ENCODE measurements at regions of chr1 and their contacts with region 1.

Region 1: GRCh38 chr1:27804791-27805190 is 25.8 kb upstream of the PPP1R8 start:
- H3K4me3 Mint-ChIP-seq: no peak overlapping the region
- H3K27ac Mint-ChIP-seq: no peak overlapping the region
- H3K4me1 Mint-ChIP-seq: no peaks in the 10 kb centered on the region
- H3K27me3 Mint-ChIP-seq: no peaks in the 10 kb centered on the region

Region 2: GRCh38 chr1:27744556-27744955 is 60.2 kb before region 1 on chr1:
- intact Hi-C with region 1: loop called (anchors 10 kb)
- H3K4me3 Mint-ChIP-seq: no peak overlapping the region
- H3K27ac Mint-ChIP-seq: no peak overlapping the region
- H3K4me1 Mint-ChIP-seq: peaks cover 3% of the 10 kb centered on the region
- H3K27me3 Mint-ChIP-seq: no peaks in the 10 kb centered on the region

Region 3: GRCh38 chr1:27760426-27760825 is 44.4 kb before region 1 on chr1:
- intact Hi-C with region 1: no loop called
- H3K4me3 Mint-ChIP-seq: no peak overlapping the region
- H3K27ac Mint-ChIP-seq: no peak overlapping the region
- H3K4me1 Mint-ChIP-seq: no peaks in the 10 kb centered on the region
- H3K27me3 Mint-ChIP-seq: no peaks in the 10 kb centered on the region

Region 4: DNA sequence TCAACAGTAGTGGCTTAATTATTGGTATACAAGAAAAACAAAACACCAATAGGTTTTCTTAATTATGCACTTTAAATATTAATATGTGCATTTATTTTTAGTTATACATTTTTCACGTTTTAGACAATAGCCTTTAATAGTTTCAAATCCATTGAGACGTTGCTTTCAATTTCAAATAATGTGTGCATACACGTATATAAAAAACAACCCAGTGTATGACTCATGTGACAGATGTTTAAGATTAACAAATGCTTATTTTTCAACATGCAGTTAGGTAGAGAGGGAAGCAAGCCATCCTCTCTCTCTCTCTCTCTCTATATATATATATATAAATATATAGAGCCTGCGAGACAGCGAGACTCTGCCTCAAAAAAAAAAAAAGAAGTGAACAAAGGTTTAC is 259.3 kb after region 1 on chr1:
- intact Hi-C with region 1: no loop called
- H3K4me3 Mint-ChIP-seq: no peak overlapping the region
- H3K27ac Mint-ChIP-seq: no peak overlapping the region
- H3K4me1 Mint-ChIP-seq: peaks cover 13% of the 10 kb centered on the region
- H3K27me3 Mint-ChIP-seq: no peaks in the 10 kb centered on the region

Measured in dendritic cell treated with granulocyte-macrophage colony-stimulating factor and Interleukin-4, amounts not matched to agents 40 ng/mL and 50 ng/mL, for 4 days (primary cell).